ENCODE measurements at regions of chr6 and their contacts with region 1.

Region 1: DNA sequence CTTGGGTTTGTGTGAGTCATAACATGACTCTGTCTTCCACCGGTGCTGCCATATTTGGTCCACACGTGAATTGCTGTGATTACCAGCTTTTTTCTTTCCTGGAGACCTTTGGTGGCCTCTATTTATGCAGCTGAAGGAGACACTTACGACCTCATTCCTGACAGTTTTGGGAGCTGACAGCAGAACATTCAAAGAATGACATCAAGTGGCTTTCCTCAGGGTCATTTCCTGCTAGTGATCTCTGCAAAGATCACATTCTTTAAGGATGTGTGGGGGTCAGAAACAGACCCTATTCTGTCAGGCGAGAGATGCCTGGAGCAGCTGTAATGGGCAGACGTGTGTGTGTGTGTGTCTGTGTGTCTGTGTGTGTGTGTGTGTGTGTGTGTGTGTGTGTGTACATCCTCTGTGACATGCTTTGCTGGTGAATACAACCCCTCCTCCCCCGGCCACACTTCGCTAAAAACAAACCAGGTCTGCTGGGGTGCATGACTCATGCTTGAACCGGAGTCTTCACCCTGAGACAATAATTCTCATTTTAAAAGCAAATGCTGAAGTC is 115.6 kb downstream of the TMEM170B start:
- DNase-seq: peak; percentile 59
- H3K4me3 Mint-ChIP-seq: no peak overlapping the region
- H3K27ac Mint-ChIP-seq: no peak overlapping the region
- H3K4me1 Mint-ChIP-seq: no peaks in the 10 kb centered on the region
- H3K27me3 Mint-ChIP-seq: no peaks in the 10 kb centered on the region
- CTCF ChIP-seq: no peak

Region 2: GRCh38 chr6:11665604-11666326 is 12.7 kb after region 1 on chr6:
- CTCF ChIA-PET with region 1: interaction called, 31 read pairs
- POLR2A ChIA-PET with region 1: no interaction called
- intact Hi-C with region 1: no loop called
- DNase-seq: no peak
- H3K4me3 Mint-ChIP-seq: no peak overlapping the region
- H3K27ac Mint-ChIP-seq: no peak overlapping the region
- H3K4me1 Mint-ChIP-seq: no peaks in the 10 kb centered on the region
- H3K27me3 Mint-ChIP-seq: no peaks in the 10 kb centered on the region
- CTCF ChIP-seq: no peak

Region 3: DNA sequence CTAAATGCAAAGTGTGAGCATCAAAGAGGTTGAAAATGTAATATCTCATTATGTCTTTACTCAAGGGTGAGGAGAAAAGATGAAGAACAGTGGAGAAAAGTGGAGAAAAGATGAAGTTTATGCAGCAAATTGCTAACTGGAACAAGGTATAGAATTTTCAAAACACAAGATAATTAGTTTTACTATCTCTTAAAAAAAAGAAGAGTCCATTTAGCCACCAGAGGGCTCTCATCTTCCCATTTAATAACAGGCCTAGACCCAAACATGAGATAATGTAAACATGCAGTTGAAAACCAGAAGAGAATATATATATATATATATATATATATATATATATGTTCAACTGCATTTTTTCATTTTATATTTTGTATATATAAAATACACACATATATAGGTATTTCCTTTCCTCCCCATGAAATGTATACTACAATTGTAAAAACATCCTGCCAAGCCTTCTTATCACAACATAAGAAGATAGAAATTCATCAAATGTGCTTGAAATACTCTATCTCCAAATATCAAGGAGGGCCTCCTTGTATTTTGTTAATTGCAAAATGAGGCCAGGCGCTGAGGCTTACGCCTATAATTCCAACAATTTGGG is 47.1 kb after region 1 on chr6:
- CTCF ChIA-PET with region 1: interaction called, 14 read pairs
- POLR2A ChIA-PET with region 1: interaction called, 3 read pairs
- intact Hi-C with region 1: loop called (anchors 2 kb)
- DNase-seq: peak; percentile 68
- H3K4me3 Mint-ChIP-seq: no peak overlapping the region
- H3K27ac Mint-ChIP-seq: no peak overlapping the region
- H3K4me1 Mint-ChIP-seq: peaks cover 25% of the 10 kb centered on the region
- H3K27me3 Mint-ChIP-seq: no peaks in the 10 kb centered on the region
- CTCF ChIP-seq: peak; percentile 37

Region 4: DNA sequence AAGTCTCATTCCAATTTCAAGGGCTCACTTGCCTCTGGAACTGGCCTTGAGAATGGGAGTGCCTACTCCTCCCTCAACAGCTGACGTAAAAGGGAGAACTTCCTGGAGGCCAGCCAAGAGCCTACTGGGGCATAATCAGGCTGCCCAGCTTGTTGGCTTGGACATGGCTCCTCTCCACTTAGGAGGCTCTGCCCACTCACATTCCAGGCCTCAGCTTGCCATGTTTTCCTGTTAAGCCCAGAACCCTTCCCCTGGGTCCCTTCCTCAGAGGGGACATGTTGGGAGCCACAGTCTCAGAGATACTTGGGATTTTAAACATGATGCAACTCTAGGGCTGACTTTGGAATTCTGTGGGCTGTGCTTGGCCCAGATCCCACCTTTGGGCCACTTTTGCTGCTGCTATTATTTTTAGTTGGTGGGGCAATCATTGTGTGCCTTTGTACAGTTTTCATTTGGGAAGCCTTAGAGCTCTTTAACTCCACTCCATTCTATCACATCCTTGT is 157.0 kb after region 1 on chr6:
- CTCF ChIA-PET with region 1: no interaction called
- POLR2A ChIA-PET with region 1: no interaction called
- intact Hi-C with region 1: no loop called
- DNase-seq: peak; percentile 98
- H3K4me3 Mint-ChIP-seq: peak overlapping the region; percentile 28
- H3K27ac Mint-ChIP-seq: peak overlapping the region; percentile 86
- H3K4me1 Mint-ChIP-seq: peaks cover 43% of the 10 kb centered on the region
- H3K27me3 Mint-ChIP-seq: no peaks in the 10 kb centered on the region
- CTCF ChIP-seq: no peak

Region 5: DNA sequence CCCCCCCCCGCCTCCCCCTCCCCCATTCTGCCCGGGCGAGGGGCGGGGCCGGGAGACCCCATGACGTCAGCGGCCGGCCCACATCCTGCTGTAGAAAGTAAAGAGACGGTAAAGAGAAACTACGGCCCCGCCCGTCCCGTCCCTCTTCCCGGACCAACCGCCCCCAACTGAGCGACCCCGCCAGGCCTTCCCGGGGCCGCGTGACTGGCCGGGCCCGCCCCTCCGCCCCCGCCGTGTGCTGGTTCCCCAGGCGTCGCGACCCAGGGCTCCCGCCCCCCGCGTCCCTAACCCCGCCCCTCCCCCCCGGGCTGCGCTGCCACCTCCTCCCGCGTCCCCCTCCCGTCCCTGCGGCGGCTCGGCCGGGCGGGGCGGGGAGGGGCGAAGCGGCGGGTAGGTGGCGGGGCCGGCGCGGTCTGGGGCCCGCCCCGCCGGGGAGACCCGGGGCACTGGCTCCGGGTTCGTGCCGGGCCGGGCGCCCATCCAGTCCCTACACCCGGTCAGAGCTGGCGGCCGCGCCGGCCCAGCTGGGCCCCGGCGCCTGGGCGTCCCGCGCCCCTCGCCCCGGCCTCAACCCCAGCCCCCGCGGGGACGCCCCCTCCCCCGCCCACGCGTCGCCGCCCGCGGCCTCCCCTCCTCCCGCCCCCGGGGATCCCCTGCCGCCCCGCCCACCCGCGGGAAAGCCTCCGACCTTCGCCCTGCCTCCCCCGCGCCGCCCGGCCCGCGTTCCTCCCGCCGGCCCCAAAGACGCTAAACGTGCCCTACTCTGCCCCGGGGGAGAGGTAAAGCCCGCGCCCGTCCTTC is 358.4 kb after region 1 on chr6:
- CTCF ChIA-PET with region 1: interaction called, 10 read pairs
- POLR2A ChIA-PET with region 1: interaction called, 3 read pairs
- intact Hi-C with region 1: no loop called
- DNase-seq: peak; percentile 97
- H3K4me3 Mint-ChIP-seq: peak overlapping the region; percentile 89
- H3K27ac Mint-ChIP-seq: peak overlapping the region; percentile 99
- H3K4me1 Mint-ChIP-seq: peaks cover 19% of the 10 kb centered on the region
- H3K27me3 Mint-ChIP-seq: no peaks in the 10 kb centered on the region
- CTCF ChIP-seq: no peak

Region 6: DNA sequence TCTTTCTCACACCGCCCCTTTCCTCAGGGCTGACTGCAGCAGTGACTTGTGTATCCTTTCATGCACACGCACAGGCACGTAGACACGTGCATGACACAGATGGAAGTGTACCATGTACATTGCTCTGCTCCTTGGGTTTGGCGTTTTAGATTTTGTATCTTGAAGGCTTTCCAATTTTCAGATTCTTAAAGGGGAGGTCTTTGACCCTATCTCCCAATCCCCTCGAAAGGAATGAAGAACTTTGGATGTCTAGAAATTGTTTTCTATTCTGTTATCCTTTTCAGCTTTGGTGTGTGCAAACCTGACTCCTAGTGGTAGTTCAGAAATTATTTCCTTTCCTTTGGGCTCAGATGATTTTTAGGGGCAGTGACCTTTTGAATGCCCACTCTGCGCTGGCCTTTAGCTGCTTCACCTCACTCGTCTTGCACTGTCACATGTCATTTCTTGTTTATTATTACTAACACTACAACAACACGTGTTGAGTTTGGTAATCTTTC is 422.0 kb after region 1 on chr6:
- CTCF ChIA-PET with region 1: interaction called, 7 read pairs
- POLR2A ChIA-PET with region 1: no interaction called
- intact Hi-C with region 1: loop called (anchors 1 kb)
- DNase-seq: peak; percentile 20
- H3K4me3 Mint-ChIP-seq: no peak overlapping the region
- H3K27ac Mint-ChIP-seq: no peak overlapping the region
- H3K4me1 Mint-ChIP-seq: peaks cover 12% of the 10 kb centered on the region
- H3K27me3 Mint-ChIP-seq: no peaks in the 10 kb centered on the region
- CTCF ChIP-seq: peak; percentile 30

Region 7: GRCh38 chr6:12233693-12234571 is 580.8 kb after region 1 on chr6:
- CTCF ChIA-PET with region 1: interaction called, 45 read pairs
- POLR2A ChIA-PET with region 1: no interaction called
- intact Hi-C with region 1: loop called (anchors 1 kb)
- DNase-seq: peak; percentile 81
- H3K4me3 Mint-ChIP-seq: no peak overlapping the region
- H3K27ac Mint-ChIP-seq: no peak overlapping the region
- H3K4me1 Mint-ChIP-seq: no peaks in the 10 kb centered on the region
- H3K27me3 Mint-ChIP-seq: no peaks in the 10 kb centered on the region
- CTCF ChIP-seq: peak; percentile 74

Measured in MCF 10A (cell line).